BJ (cell line): ENCODE measurements at regions of chr5 and their contacts with region 1.

Region 1: DNA sequence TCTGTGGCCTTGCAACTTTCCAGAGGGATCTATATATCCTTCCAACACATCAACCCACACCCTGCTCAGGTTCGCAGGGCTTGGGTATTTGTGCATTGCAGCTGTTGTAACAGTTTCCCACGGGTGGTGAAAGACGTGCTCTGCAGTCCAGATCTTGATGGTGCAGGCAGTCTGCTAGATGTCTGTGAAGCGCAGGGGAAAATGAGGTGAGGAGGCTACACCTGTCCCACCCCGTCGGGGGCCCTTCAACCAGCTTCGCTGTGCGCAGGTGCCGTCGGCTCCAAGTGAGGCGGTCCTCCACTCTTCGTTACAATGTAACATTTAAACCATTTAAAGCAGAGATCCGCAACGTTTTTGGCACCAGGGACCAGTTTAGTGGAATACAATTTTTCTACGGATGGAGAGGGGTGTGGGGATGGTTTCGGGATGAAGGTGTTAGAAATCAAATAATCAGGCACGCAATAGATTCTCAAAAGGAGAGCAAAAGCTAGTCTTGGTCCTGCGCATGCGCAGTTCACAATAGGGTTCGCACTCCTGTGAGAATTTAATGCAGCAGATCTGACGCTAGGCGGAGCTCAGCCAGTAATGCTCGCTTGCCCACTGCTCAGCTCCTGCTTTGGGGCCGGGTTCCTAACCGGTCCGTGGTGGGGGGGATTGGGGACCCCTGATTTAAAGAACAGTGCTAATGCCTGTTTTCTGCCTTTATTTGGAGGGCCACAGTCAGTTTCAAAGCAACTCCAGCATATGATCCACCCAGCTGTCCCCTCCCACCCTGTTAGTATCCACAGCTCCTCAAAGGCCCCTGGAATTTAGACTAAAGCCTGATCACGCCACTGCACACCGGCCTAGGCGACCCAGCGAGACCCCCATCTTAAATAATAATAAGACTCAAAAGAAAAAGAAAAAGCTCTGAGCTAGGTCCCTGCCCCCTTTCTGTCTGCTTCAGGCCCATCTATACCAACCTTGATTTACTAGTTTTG is 97.1 kb upstream of the SELENOP start:
- DNase-seq: peak; percentile 14
- H3K4me3 ChIP-seq: peak overlapping the region; percentile 41
- H3K27me3 ChIP-seq: peaks cover 7% of the 10 kb centered on the region
- CTCF ChIP-seq: peak; percentile 88

Region 2: DNA sequence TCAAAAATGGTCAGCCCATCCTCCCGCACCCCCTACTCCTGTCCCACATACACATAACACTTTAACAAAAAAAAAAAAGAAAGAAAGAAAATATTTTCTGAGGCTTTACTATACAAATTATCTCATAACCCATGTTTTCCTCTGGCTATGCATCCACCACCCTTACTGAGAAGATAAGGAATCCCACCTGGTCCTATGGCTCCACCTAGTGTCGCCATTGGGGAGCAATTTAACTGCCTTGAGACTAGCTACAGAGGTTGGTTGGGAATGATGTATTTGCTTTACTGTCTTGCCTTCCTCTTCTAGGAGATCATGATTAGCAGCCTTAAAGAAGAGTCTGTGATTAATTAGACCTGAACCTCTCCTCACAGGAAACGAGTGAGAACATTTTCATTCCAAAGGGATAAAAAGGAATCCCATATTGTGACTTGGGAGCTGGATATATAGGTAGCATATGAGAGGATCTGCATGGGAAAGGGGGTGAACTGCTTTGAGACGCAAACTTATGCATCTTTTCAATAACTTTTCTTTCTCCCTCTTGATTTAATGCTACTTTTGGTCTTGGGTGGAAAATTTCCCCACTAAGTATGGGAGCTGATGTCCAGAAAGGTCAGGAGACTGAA is 19.4 kb before region 1 on chr5:
- CTCF ChIA-PET with region 1: interaction called, 11 read pairs
- POLR2A ChIA-PET with region 1: no interaction called
- DNase-seq: peak; percentile 11
- H3K4me3 ChIP-seq: no peak overlapping the region
- H3K27me3 ChIP-seq: peaks cover 10% of the 10 kb centered on the region
- CTCF ChIP-seq: peak; percentile 89

Region 3: DNA sequence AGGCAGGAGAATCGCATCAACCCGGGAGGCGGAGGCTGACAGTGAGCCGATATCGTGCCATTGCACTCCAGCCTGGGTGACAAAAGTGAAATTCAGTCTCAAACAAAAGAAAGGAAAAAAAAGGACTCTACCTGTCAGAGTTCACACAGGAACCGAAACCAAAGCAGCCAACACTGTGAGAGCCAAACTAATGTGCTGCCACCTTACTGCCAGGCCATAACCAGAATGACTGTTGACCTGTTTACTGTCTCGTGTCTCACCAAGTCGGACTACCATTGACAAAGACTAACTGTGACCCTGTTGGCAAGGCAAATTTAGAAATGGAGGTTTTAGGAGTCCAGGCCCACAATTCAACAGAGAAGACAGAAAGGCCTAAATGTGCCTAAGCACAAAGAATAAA is 18.9 kb after region 1 on chr5:
- CTCF ChIA-PET with region 1: interaction called, 15 read pairs
- POLR2A ChIA-PET with region 1: no interaction called
- DNase-seq: no peak
- H3K4me3 ChIP-seq: no peak overlapping the region
- H3K27me3 ChIP-seq: 0 out of 2 replicates have a peak, but pooled peaks cover 2% of the 10 kb centered on the region
- CTCF ChIP-seq: no peak

Region 4: GRCh38 chr5:42994246-42995151 is 85.7 kb after region 1 on chr5:
- CTCF ChIA-PET with region 1: interaction called, 11 read pairs
- POLR2A ChIA-PET with region 1: no interaction called
- DNase-seq: peak; percentile 52
- H3K4me3 ChIP-seq: peak overlapping the region; percentile 36
- H3K27me3 ChIP-seq: no peaks in the 10 kb centered on the region
- CTCF ChIP-seq: peak; percentile 84

Region 5: DNA sequence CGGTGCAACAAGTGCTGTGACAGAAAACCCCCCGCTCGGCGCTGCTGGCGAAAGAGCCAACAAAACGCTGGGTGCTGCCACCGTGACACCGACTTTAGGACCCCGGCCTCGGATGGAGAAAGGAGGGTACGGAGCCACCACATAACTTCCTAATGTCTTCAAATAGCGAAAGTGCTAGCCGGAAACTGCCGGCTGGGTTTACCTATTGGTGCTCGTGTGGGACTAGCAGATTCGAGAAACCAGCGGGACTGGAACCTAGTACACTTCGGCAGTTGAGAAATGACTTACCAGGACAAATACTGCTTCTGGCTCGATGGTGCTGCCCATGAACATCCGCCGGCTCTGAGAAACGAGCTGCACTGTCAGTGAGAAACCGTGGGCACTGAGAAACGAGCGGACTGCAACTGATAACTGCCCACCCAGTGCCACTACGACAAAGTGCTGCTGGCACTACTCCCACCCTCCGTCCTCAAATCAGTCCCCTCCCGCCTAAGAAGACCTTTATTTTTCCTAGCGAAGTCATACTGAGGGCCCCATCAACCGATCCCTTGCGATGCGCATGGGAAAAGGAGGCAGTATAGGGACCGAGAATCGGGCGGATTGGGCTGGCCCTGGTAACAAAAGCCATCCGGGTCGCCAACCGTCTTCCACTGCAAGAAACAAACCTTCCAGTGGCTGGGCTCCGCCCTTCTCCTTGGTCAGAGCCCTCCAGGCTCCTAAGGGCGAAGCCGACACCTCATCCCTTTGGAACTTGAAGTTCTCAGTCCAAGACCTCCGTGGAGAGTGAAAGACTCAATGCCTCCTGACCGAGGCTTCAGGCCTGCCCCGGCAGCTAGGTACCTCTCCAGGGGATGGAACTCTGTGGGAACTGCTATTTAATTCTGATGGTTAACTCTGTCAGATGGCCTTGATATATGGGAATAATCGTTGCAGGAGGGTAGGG is 158.3 kb after region 1 on chr5:
- CTCF ChIA-PET with region 1: interaction called, 10 read pairs
- POLR2A ChIA-PET with region 1: no interaction called
- DNase-seq: no peak
- H3K4me3 ChIP-seq: peak overlapping the region; percentile 66
- H3K27me3 ChIP-seq: no peaks in the 10 kb centered on the region
- CTCF ChIP-seq: no peak

Region 6: DNA sequence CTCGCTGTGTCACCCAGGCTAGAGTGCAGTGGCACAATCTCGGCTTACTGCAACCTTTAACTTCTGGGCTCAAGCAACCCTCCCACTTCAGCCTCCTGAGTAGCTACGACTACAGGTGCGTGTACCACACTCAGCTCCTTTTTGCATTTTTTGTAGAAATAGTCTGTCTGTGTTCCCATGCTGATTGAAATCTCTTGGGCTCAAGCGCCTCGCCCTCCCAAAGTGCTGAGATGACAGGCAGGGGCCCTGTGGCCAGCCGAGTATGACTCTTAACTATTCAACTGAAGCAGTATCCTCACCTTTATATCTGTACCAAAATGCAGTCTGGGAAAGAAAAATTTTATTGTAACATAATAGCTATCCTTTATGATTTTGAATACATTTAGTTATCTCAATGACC is 271.0 kb after region 1 on chr5:
- CTCF ChIA-PET with region 1: no interaction called
- POLR2A ChIA-PET with region 1: no interaction called
- DNase-seq: no peak
- H3K4me3 ChIP-seq: no peak overlapping the region
- H3K27me3 ChIP-seq: no peaks in the 10 kb centered on the region
- CTCF ChIP-seq: no peak

Region 7: DNA sequence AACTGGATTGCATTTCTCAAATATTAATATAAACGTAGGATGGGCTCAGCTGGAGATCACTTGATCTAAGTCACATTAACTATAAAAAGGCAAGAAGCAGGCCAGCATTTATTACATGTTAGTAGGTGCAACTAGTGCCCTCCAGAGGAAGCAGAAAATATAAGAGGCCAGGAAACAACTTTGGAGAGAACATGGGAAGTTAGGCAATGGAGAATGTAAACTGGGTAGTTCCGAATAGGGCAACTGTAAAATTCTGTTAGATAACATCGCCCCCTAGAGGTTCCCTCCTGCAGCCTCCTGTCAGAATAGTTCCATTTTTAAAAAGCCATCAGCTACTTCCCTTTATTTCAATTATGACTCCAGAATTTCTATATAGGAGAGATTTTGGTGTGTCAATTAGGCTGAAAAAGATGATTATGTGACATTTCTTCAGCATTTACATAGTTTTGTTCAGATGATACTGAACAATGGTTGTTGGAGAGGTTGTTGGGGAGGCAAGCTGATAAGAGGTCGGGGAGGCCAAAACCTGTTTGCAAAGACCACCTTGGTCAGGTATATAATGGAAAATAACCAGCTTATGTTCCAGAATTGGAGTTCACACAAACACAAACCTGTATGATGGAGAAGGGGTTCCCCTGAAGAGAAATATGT is 481.0 kb after region 1 on chr5:
- CTCF ChIA-PET with region 1: interaction called, 37 read pairs
- POLR2A ChIA-PET with region 1: no interaction called
- DNase-seq: peak; percentile 65
- H3K4me3 ChIP-seq: no peak overlapping the region
- H3K27me3 ChIP-seq: no peaks in the 10 kb centered on the region
- CTCF ChIP-seq: peak; percentile 82